ENCODE measurements at regions of chr6 and their contacts with region 1.

Region 1: DNA sequence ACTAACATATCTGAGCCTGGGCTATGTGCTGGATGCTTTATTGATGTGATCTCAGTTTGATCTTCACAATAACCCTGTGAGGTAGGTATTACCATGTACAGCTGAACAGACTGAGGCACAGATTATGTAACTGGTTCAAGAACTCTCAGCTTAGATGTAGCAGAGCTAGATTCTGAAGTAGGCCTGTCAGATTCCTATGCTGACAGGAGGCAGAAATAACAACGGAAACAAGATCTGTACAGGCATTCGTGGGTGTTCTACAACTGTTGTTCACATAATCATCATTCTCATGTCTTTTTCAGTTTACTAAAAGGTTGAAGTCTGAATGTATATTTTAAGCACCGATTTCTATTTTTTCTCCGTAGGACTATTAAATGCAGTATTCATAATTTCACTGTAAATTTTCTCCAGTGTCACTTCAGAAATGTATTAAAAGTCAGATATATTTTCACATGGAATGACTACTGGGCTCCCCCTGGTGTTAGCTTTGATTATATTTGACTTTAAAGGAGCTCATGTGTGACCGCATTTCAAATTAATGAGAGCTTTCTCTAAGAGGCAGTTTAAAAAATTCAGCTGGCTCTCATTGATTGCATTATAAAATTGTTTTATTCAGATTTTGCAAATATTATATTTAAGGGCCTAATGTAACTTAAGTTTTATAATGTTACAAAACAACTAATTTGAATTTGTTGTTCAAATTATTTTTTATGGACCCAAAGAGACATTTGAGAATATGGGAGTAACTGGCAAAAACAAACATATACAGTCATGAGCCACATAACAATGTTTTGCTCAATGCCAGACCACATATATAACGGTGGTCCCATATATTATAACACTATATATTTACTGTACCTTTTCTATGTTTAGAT is 36.4 kb upstream of the SLC17A4 start:
- DNase-seq: peak in 2 of 9 experiments; percentile 23 to 33
- ATAC-seq: no peak
- H3K4me3 ChIP-seq: no peak overlapping the region
- H3K4me3 Mint-ChIP-seq: no peak overlapping the region
- H3K27ac ChIP-seq: no peak overlapping the region
- H3K27ac Mint-ChIP-seq: no peak overlapping the region
- H3K4me1 ChIP-seq: no peaks in the 10 kb centered on the region
- H3K4me1 Mint-ChIP-seq: no peaks in the 10 kb centered on the region
- H3K27me3 ChIP-seq: no peaks in the 10 kb centered on the region
- H3K27me3 Mint-ChIP-seq: peaks cover 14% of the 10 kb centered on the region
- CTCF ChIP-seq: peak; percentile 52

Region 2: DNA sequence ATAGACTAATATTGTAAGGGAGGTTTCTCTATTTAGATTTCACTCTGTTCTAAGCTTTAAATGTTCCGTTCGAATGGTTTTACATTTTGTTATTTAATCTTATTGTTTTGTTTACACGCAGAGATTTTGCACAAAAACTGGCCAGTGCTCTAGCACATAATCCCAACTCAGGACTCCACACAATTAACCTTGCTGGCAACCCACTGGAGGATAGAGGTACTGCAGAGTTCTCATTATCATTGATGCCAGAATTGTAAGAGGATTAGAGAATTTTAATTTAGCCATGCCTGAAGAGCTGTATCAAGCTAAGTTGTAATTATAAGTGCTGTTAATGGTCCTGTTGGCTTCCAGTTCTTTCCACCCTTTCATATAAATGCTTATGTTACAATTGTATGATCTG is 245.8 kb before region 1 on chr6:
- CTCF ChIA-PET with region 1: no interaction called
- POLR2A ChIA-PET with region 1: no interaction called
- intact Hi-C with region 1: no loop called
- DNase-seq: no peak
- ATAC-seq: no peak
- H3K4me3 ChIP-seq: no peak overlapping the region
- H3K4me3 Mint-ChIP-seq: no peak overlapping the region
- H3K27ac ChIP-seq: no peak overlapping the region
- H3K27ac Mint-ChIP-seq: no peak overlapping the region
- H3K4me1 ChIP-seq: no peaks in the 10 kb centered on the region
- H3K4me1 Mint-ChIP-seq: no peaks in the 10 kb centered on the region
- H3K27me3 ChIP-seq: no peaks in the 10 kb centered on the region
- H3K27me3 Mint-ChIP-seq: no peaks in the 10 kb centered on the region
- CTCF ChIP-seq: peak; percentile 43

Region 3: GRCh38 chr6:25519856-25520255 is 198.2 kb before region 1 on chr6:
- CTCF ChIA-PET with region 1: no interaction called
- POLR2A ChIA-PET with region 1: no interaction called
- intact Hi-C with region 1: no loop called
- DNase-seq: no peak
- ATAC-seq: no peak
- H3K4me3 ChIP-seq: no peak overlapping the region
- H3K4me3 Mint-ChIP-seq: no peak overlapping the region
- H3K27ac ChIP-seq: no peak overlapping the region
- H3K27ac Mint-ChIP-seq: no peak overlapping the region
- H3K4me1 ChIP-seq: no peaks in the 10 kb centered on the region
- H3K4me1 Mint-ChIP-seq: no peaks in the 10 kb centered on the region
- H3K27me3 ChIP-seq: no peaks in the 10 kb centered on the region
- H3K27me3 Mint-ChIP-seq: no peaks in the 10 kb centered on the region
- CTCF ChIP-seq: no peak

Region 4: DNA sequence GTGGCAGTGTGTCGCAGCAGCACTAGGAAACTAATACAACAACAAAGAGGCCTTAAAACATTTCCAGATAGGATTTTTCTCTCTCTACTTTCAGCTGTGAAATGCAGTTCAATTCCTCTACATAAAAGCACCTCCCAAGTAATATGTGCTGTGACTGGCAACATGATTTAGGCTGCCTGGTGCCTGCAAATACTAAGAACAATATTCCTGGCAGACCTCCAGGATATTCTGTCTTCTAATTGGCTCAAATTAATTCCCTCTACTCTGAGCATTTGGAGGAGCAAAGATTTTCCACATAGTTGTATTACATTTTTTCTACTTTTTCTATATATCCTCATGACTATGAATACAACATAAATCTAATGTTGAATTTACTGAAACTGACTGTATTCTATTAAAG is 32.9 kb before region 1 on chr6:
- CTCF ChIA-PET with region 1: no interaction called
- POLR2A ChIA-PET with region 1: no interaction called
- intact Hi-C with region 1: no loop called
- DNase-seq: no peak
- ATAC-seq: no peak
- H3K4me3 ChIP-seq: no peak overlapping the region
- H3K4me3 Mint-ChIP-seq: no peak overlapping the region
- H3K27ac ChIP-seq: no peak overlapping the region
- H3K27ac Mint-ChIP-seq: no peak overlapping the region
- H3K4me1 ChIP-seq: no peaks in the 10 kb centered on the region
- H3K4me1 Mint-ChIP-seq: no peaks in the 10 kb centered on the region
- H3K27me3 ChIP-seq: peaks cover 0 to 3% of the 10 kb centered on the region in 2 experiments
- H3K27me3 Mint-ChIP-seq: peaks cover 23% of the 10 kb centered on the region
- CTCF ChIP-seq: no peak

Region 5: DNA sequence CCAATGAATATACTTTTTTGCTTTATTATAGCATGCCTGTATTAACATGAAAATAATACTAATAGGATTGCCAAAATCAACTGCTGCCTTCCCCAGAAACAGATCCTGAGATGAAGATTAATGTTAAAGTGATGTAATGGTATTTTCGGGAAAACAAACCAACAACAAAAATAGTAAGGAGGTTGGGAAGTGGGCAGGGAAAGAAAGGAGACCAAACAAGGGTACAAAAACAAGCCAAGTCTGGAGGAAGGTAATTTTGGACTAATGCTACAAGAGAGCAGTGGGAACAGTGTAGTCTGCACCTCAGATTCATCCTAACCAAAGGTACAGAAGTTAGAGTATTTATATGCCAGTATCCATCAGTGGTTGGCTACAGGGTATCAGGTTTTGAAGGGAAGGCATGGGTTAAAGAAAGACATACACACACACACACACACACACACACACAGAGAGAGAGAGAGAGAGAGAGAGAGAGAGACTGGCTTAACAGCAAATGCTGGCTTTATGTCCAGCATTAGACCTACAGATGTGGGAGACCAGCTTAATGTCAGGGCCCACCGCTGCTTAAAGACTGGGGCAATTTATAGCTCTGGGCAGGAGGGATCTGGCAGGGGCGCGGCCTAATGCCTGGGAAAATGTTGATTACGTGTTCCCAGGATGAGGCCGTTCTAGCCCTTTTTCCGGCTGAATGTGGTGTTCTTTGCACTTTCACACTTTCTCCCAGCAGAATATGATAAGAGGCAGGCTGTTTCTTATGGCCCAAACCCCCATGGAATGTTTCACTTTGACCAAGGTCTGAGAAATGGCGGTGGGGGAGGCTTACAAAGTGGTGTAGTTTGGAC is 117.6 kb after region 1 on chr6:
- CTCF ChIA-PET with region 1: no interaction called
- POLR2A ChIA-PET with region 1: no interaction called
- intact Hi-C with region 1: no loop called
- DNase-seq: no peak
- ATAC-seq: no peak
- H3K4me3 ChIP-seq: no peak overlapping the region
- H3K4me3 Mint-ChIP-seq: no peak overlapping the region
- H3K27ac ChIP-seq: no peak overlapping the region
- H3K27ac Mint-ChIP-seq: no peak overlapping the region
- H3K4me1 ChIP-seq: no peaks in the 10 kb centered on the region
- H3K4me1 Mint-ChIP-seq: no peaks in the 10 kb centered on the region
- H3K27me3 ChIP-seq: no peaks in the 10 kb centered on the region
- H3K27me3 Mint-ChIP-seq: peaks cover 10% of the 10 kb centered on the region
- CTCF ChIP-seq: no peak

Region 6: DNA sequence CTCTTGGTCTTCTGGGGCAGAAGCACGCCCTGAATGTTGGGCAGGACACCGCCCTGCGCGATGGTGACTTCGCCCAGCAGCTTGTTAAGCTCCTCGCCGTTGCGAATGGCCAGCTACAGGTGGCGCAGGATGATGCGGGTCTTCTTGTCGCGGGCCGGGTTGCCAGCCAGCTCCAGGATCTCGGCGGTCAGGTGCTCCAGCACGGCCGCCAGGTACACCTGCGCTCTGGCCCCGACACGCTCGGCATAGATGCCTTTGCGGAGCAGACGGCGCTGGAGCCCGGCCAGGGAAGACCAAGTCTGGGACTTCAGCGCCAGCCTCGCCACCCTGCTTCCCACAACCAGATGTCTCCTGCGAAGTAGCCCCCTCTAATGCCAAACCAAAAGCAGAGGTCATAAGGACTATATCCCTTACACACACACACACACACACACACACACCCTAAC is 164.0 kb after region 1 on chr6:
- CTCF ChIA-PET with region 1: interaction called, 13 read pairs
- POLR2A ChIA-PET with region 1: no interaction called
- intact Hi-C with region 1: loop called (anchors 2 kb)
- DNase-seq: peak in 6 of 9 experiments; percentile 5 to 71 (median 55)
- ATAC-seq: peak; percentile 85
- H3K4me3 ChIP-seq: peak overlapping the region in 1 of 2 experiments; percentile 42
- H3K4me3 Mint-ChIP-seq: peak overlapping the region; percentile 89
- H3K27ac ChIP-seq: no peak overlapping the region
- H3K27ac Mint-ChIP-seq: peak overlapping the region; percentile 87
- H3K4me1 ChIP-seq: no peaks in the 10 kb centered on the region
- H3K4me1 Mint-ChIP-seq: peaks cover 2% of the 10 kb centered on the region
- H3K27me3 ChIP-seq: no peaks in the 10 kb centered on the region
- H3K27me3 Mint-ChIP-seq: peaks cover 3% of the 10 kb centered on the region
- CTCF ChIP-seq: peak; percentile 33

Region 7: DNA sequence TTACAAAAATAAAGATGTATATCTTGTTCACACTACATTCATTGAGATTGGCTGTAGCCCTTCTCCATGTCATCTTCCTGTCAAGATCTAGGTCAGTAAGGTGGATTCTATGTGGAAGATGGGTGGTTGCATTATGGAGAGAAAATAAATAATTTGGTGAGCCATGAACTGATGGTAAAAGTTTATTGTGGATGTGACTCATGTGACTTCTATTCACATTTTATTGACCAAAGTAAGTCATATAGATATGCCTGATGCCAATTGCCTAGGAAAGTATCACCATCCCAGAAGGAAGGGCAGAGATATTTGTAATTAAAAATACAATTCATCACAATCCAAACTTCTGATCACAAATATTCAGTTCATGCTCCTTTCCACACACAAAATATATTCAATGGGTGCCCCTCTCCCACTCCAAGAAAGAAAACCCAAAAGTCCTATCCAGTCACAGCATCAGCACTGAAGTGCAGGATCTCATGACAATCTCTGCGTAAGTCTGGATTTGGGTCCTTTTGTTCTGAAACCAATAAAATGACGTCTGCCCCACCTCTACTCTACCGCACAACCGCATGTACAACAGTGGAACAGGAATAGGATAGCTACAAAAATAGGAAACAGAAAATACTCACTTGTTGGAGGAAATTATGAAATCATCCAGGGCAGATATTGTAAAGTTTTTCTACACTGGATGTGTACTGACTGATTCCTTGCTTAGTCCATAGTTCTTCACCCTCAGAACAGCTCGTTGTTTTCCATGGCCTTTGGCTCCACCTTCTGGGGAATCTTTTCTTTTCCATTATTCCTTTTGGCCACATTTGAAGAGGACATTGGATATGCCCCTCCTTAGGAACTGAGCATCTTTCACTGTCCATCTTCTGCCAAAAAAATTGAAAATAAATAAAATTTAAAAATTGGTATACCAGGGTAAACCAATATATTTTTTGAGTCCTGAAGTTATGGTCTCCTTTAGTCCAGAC is 172.1 kb after region 1 on chr6:
- CTCF ChIA-PET with region 1: interaction called, 3 read pairs
- POLR2A ChIA-PET with region 1: no interaction called
- intact Hi-C with region 1: loop called (anchors 1 to 2 kb)
- DNase-seq: peak in 3 of 9 experiments; percentile 8 to 57 (median 48)
- ATAC-seq: no peak
- H3K4me3 ChIP-seq: no peak overlapping the region
- H3K4me3 Mint-ChIP-seq: no peak overlapping the region
- H3K27ac ChIP-seq: no peak overlapping the region
- H3K27ac Mint-ChIP-seq: no peak overlapping the region
- H3K4me1 ChIP-seq: no peaks in the 10 kb centered on the region
- H3K4me1 Mint-ChIP-seq: no peaks in the 10 kb centered on the region
- H3K27me3 ChIP-seq: no peaks in the 10 kb centered on the region
- H3K27me3 Mint-ChIP-seq: peaks cover 5% of the 10 kb centered on the region
- CTCF ChIP-seq: no peak

Region 8: GRCh38 chr6:25942561-25943147 is 224.6 kb after region 1 on chr6:
- CTCF ChIA-PET with region 1: interaction called, 4 read pairs
- POLR2A ChIA-PET with region 1: no interaction called
- intact Hi-C with region 1: loop called in 1 of 2 experiments (anchors 1 kb)
- DNase-seq: peak in 2 of 9 experiments; percentile 53 to 67
- ATAC-seq: peak; percentile 38
- H3K4me3 ChIP-seq: no peak overlapping the region
- H3K4me3 Mint-ChIP-seq: no peak overlapping the region
- H3K27ac ChIP-seq: no peak overlapping the region
- H3K27ac Mint-ChIP-seq: no peak overlapping the region
- H3K4me1 ChIP-seq: no peaks in the 10 kb centered on the region
- H3K4me1 Mint-ChIP-seq: peaks cover 3% of the 10 kb centered on the region
- H3K27me3 ChIP-seq: no peaks in the 10 kb centered on the region
- H3K27me3 Mint-ChIP-seq: peaks cover 4% of the 10 kb centered on the region
- CTCF ChIP-seq: peak; percentile 65

Measured in CD8-positive, alpha-beta T cell (primary cell).